ENCODE measurements at regions of chr18 and their contacts with region 1.

Region 1: DNA sequence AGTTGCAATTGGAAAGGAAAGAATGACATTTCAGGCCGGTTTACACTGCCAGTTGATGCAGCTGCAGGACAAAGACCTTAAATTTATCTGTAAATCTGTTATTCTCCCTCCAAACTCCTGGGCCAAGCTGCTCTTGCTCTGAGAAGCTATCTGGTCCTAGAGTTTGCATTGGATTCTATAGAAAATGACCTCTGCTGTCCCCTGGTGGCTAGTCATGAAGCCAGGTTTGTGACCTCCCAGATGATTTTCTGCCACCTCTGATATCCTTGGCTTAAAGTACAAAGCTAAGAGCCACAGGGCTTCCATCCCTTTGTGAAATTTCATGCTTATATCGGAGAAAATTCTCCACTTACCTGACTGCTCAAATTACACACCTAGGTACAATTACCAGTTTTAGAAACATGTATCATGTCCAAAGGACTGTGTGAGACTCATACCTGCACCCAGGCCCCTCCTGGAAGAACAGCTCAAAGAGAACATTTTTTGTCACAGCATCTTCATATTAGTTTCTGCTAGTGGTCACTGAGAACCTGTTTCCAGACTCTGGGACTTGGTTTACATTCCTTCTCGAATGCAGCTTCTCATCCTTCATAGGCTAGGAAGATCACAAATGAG is 28.9 kb upstream of the IER3IP1 start:
- DNase-seq: peak; percentile 34 to 66 (median 56)
- H3K4me3 ChIP-seq: no peak overlapping the region
- H3K27ac ChIP-seq: no peak overlapping the region
- H3K4me1 ChIP-seq: no peaks in the 10 kb centered on the region
- H3K27me3 ChIP-seq: peaks cover 10 to 31% (median 12%) of the 10 kb centered on the region in 5 experiments

Region 2: GRCh38 chr18:47100214-47100831 is 104.7 kb before region 1 on chr18:
- CTCF ChIA-PET with region 1: interaction called, 81 read pairs
- POLR2A ChIA-PET with region 1: no interaction called
- DNase-seq: peak; percentile 42 to 69 (median 63)
- H3K4me3 ChIP-seq: no peak overlapping the region
- H3K27ac ChIP-seq: no peak overlapping the region
- H3K4me1 ChIP-seq: no peaks in the 10 kb centered on the region
- H3K27me3 ChIP-seq: no peaks in the 10 kb centered on the region

Region 3: GRCh38 chr18:47113796-47114540 is 91.0 kb before region 1 on chr18:
- CTCF ChIA-PET with region 1: interaction called, 25 read pairs
- POLR2A ChIA-PET with region 1: no interaction called
- DNase-seq: no peak
- H3K4me3 ChIP-seq: no peak overlapping the region
- H3K27ac ChIP-seq: no peak overlapping the region
- H3K4me1 ChIP-seq: no peaks in the 10 kb centered on the region
- H3K27me3 ChIP-seq: no peaks in the 10 kb centered on the region

Region 4: DNA sequence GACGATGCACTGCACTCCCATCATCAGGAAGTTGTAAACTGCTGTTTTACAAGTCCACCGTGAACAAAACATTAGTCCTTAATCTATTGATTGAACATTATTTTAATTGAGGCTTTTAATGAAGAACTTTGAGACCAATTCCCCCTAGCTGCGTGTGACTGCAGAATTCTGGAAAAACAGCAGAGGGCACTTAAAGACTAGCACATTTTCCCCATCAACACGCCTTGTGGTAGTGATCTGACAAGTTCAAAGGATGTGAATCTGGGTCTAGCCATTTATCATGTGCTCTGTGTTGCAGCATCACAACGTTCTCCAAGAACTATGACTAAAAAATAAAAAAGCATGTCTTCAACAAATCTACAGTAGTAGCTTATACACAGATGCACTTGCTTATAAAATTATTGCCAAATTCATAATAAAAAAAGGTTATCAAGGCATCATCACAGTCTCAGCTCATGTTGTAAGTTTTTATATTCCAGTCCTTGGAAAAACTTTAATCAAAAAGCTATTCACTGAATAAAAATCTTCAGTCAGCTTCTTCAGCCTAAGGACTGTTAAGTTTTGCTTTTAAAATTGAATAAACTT is 10.6 kb after region 1 on chr18:
- CTCF ChIA-PET with region 1: interaction called, 29 read pairs
- POLR2A ChIA-PET with region 1: no interaction called
- DNase-seq: peak; percentile 55 to 82 (median 79)
- H3K4me3 ChIP-seq: no peak overlapping the region
- H3K27ac ChIP-seq: no peak overlapping the region
- H3K4me1 ChIP-seq: no peaks in the 10 kb centered on the region
- H3K27me3 ChIP-seq: peaks cover 11 to 48% (median 31%) of the 10 kb centered on the region in 5 experiments

Region 5: DNA sequence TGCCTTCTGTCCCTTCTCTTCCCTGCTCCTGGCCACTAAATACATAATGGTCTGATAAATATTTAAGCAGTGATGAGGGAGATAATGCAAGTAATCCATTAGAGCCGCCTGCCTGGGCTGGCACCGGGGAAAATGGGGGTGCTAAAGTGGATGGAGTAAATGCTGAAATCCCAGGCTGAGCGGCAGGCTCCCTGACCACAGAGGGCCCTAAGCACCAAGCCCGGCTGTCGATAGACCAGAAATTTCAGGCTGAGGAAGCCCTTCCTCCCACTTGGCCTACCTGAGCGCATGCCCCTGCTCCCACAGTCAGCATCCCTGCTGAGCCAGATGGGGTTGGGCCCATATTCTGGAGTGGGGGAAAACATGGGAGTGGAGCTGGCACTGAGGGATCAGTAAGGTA is 243.9 kb after region 1 on chr18:
- CTCF ChIA-PET with region 1: no interaction called
- POLR2A ChIA-PET with region 1: no interaction called
- DNase-seq: no peak
- H3K4me3 ChIP-seq: no peak overlapping the region
- H3K27ac ChIP-seq: no peak overlapping the region
- H3K4me1 ChIP-seq: no peaks in the 10 kb centered on the region
- H3K27me3 ChIP-seq: no peaks in the 10 kb centered on the region

Measured in common myeloid progenitor, CD34-positive (primary cell).